Right ventricle myocardium inferior (tissue), 1 donor: ENCODE measurements at regions of chr3 and their contacts with region 1.

Region 1: GRCh38 chr3:38346587-38347410 is at the start of gene XYLB:
- DNase-seq: peak; percentile 96
- ATAC-seq: peak; percentile 98
- total RNA-seq, gene XYLB: 0.57 TPM

Region 2: GRCh38 chr3:38117748-38118420 is 228.9 kb before region 1 on chr3:
- intact Hi-C with region 1: loop called (anchors 10 kb)
- DNase-seq: peak; percentile 74
- ATAC-seq: peak; percentile 69

Region 3: GRCh38 chr3:38383156-38383875 is 36.5 kb after region 1 on chr3:
- intact Hi-C with region 1: no loop called
- DNase-seq: no peak
- ATAC-seq: no peak